PC-9 (cell line): ENCODE measurements at regions of chr11 and their contacts with region 1.

Region 1: GRCh38 chr11:33687733-33688479 is 12.7 kb downstream of the C11orf91 start:
- DNase-seq: peak; percentile 61 to 87
- H3K4me3 ChIP-seq: no peak overlapping the region
- H3K27ac ChIP-seq: peak overlapping the region; percentile 99
- H3K4me1 ChIP-seq: peaks cover 56% of the 10 kb centered on the region
- H3K27me3 ChIP-seq: no peaks in the 10 kb centered on the region
- CTCF ChIP-seq: peak; percentile 97

Region 2: DNA sequence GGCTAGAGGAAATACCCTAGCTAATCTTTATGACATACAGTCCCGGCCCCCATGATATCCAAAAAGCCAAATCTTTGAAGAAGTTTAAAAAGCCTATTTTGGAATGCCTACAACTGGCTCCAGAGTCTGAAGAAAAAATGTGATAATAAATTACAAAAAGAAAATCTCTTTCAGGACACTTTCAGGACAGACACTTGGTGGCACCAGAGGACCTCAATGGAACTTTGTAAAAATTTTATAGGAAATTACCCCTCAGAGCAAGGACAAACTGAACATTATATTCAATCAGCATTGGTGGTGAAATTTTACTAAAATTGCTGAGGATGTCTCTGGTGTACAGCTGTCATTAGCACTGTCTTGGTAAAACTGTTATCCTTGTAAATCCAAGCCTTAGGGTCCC is 974.4 kb before region 1 on chr11:
- CTCF ChIA-PET with region 1: no interaction called
- POLR2A ChIA-PET with region 1: no interaction called
- intact Hi-C with region 1: loop called (anchors 2 kb)
- DNase-seq: peak in 1 of 2 experiments; percentile 11
- H3K4me3 ChIP-seq: no peak overlapping the region
- H3K27ac ChIP-seq: no peak overlapping the region
- H3K4me1 ChIP-seq: peaks cover 4% of the 10 kb centered on the region
- H3K27me3 ChIP-seq: no peaks in the 10 kb centered on the region
- CTCF ChIP-seq: peak; percentile 80

Region 3: DNA sequence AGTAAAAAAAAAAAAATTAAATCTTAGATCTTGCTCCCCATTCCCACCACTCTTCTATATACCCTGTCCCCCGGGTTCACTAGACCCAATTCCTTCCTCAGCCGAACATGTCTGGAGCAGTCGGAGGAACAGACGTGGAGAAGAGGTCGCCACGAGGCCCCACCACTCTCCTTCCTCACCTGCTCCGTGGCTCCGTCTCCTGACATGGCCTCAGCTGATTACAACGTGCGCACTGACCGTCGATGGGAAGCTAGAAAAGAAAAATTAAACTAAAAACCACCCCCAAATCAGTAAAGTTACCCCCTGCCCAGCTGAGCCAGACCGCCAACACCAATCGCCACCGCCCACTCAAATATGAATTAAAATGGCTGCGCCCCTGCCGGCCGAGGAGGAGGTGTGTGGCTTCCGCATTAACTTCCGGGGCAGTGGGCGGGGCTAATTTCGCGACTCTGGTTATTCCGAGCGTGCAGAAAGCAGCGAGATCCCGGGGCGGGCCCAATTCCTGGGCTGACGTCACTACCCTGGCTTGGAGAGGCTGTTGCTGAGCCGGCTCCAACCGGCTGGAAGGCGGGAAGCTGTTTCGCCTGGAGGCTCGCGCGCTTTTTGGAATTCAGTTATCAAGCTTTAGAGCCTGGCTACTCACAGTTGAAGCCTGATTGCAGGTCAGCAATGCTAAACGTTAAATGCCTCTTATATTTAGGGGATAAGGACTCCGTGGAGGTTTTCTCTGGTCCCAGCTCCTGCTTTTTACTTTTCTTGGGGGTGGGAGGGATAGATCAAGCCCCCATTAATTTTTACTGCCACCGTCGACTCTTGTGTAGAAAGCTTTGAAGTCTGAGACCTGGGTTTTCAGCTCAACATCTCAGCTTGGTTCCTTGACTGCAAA is 526.5 kb before region 1 on chr11 and contains the start of gene CSTF3:
- CTCF ChIA-PET with region 1: no interaction called
- POLR2A ChIA-PET with region 1: interaction called, 8 read pairs
- intact Hi-C with region 1: loop called (anchors 1 kb)
- DNase-seq: peak; percentile 97 to 100
- H3K4me3 ChIP-seq: peak within 1 kb of the TSS; percentile 76
- H3K27ac ChIP-seq: peak within 1 kb of the TSS; percentile 75
- H3K4me1 ChIP-seq: peaks cover 35% of the 10 kb centered on the region
- H3K27me3 ChIP-seq: no peaks in the 10 kb centered on the region
- CTCF ChIP-seq: peak; percentile 65
- total RNA-seq, gene CSTF3: 45.6 and 46.5 TPM in 2 replicates

Region 4: GRCh38 chr11:33362051-33362910 is 325.6 kb before region 1 on chr11:
- CTCF ChIA-PET with region 1: no interaction called
- POLR2A ChIA-PET with region 1: no interaction called
- intact Hi-C with region 1: loop called (anchors 1 kb)
- DNase-seq: peak in 1 of 2 experiments; percentile 54
- H3K4me3 ChIP-seq: no peak overlapping the region
- H3K27ac ChIP-seq: no peak overlapping the region
- H3K4me1 ChIP-seq: no peaks in the 10 kb centered on the region
- H3K27me3 ChIP-seq: no peaks in the 10 kb centered on the region
- CTCF ChIP-seq: peak; percentile 91

Region 5: GRCh38 chr11:33633241-33633901 is 54.5 kb before region 1 on chr11:
- CTCF ChIA-PET with region 1: interaction called, 3 read pairs
- POLR2A ChIA-PET with region 1: interaction called, 11 read pairs
- intact Hi-C with region 1: loop called (anchors 1 kb)
- DNase-seq: peak; percentile 85 to 99
- H3K4me3 ChIP-seq: peak overlapping the region; percentile 4; the same call in 1 of the 2 replicates
- H3K27ac ChIP-seq: peak overlapping the region; percentile 99
- H3K4me1 ChIP-seq: peaks cover 49% of the 10 kb centered on the region
- H3K27me3 ChIP-seq: no peaks in the 10 kb centered on the region
- CTCF ChIP-seq: no peak

Region 6: DNA sequence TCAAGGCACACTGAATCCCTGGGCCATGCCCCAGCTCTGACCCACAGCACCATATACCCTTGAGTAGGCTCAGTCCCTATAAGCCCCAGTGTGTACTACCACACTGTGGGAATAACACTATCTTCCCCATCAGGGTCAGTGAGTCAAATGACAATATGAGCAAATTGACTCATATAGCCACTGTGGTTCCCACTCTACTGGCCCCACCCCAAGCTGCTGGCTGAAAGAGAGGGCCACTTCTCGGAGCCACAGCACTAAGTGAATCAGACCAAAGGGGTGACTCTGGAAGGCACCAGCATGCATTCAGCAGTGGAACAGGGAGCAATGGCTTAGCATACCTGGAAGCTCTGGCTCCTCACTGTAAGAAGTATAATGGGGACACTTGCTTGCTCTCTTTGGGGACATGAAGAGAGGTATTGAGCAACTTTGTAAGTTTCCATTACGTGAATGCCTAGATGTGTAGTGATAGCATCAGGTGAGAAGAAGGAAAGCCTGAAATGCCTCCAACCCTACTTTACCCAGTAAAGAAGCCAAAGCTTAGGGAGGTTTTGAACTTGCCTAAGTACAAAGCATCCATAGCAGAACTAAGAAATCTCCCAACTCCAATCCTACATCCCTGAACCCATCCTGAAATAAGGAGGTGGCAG is 34.8 kb after region 1 on chr11:
- CTCF ChIA-PET with region 1: interaction called, 4 read pairs
- POLR2A ChIA-PET with region 1: interaction called, 8 read pairs
- intact Hi-C with region 1: loop called (anchors 1 kb)
- DNase-seq: peak; percentile 70 to 73
- H3K4me3 ChIP-seq: no peak overlapping the region
- H3K27ac ChIP-seq: peak overlapping the region; percentile 67
- H3K4me1 ChIP-seq: peaks cover 38% of the 10 kb centered on the region
- H3K27me3 ChIP-seq: no peaks in the 10 kb centered on the region
- CTCF ChIP-seq: no peak